Right ventricle myocardium superior (tissue), 1 donor: ENCODE measurements at regions of chr2 and their contacts with region 1.

Region 1: GRCh38 chr2:217988014-217988839 is 14.6 kb downstream of the TNS1 start:
- DNase-seq: peak; percentile 90
- ATAC-seq: peak; percentile 87

Region 2: GRCh38 chr2:217743966-217744761 is 244.1 kb before region 1 on chr2:
- intact Hi-C with region 1: no loop called
- DNase-seq: peak; percentile 67
- ATAC-seq: peak; percentile 84

Region 3: GRCh38 chr2:217886720-217887309 is 101.4 kb before region 1 on chr2:
- intact Hi-C with region 1: loop called (anchors 5 kb)
- DNase-seq: peak; percentile 66
- ATAC-seq: peak; percentile 55

Region 4: DNA sequence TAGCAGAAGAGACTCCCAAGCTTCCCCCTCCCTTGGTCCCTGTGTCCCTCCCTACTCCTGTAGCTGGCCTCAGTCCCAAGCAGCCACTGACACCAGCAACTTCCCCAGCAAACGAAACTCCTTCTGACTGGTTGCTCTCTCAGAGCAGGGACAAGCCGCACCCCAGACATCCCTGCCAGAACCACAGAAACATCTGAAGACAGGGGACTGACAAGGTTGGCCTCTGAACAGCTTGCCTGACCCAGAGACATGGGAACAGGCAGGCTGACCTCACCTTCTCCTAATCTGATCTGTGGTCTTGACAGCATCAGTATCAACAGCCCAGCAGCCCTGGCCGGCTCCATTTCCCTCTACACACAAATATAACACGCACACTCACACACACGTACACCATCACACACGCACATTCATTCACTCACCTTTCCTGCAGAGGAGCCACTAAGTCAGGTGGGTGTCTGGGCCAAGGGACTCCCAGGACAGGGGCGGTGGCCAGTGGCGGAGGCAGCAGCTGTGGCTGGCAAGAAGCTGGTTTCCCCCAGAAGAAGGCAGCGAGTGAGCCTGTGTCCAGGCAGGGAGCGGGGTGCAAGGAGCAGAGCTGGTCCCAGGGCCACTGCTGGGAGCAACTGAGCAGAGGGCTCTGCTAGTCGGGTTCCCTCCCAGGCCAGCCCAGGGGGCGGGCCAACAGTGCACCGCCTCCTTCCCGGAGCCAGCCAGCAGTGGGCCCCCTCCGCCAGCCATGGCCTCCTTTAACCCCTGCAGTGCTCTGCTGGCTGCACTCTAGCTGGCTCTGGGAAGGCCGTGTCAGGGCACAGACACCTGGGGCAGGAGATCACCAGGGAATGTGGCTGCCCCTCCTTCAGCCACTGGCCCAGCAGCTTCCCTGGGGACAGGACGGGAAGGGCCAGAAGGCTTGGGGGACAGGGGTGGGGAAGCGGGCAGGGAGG is 44.5 kb before region 1 on chr2:
- intact Hi-C with region 1: loop called (anchors 2 kb)
- DNase-seq: peak; percentile 92
- ATAC-seq: peak; percentile 88